ENCODE measurements at regions of chr12 and their contacts with region 1.

Region 1: GRCh38 chr12:46260151-46260918 is 8.5 kb downstream of the SLC38A1 start:
- DNase-seq: no peak
- ATAC-seq: no peak
- H3K4me3 ChIP-seq: no peak overlapping the region
- H3K4me3 Mint-ChIP-seq: no peak overlapping the region
- H3K27ac ChIP-seq: peak overlapping the region; percentile 23
- H3K27ac Mint-ChIP-seq: no peak overlapping the region
- H3K4me1 ChIP-seq: peaks cover 35 to 58% of the 10 kb centered on the region in 2 experiments
- H3K4me1 Mint-ChIP-seq: peaks cover 27 to 53% (median 53%) of the 10 kb centered on the region in 3 donors
- H3K27me3 ChIP-seq: no peaks in the 10 kb centered on the region
- H3K27me3 Mint-ChIP-seq: no peaks in the 10 kb centered on the region

Region 2: DNA sequence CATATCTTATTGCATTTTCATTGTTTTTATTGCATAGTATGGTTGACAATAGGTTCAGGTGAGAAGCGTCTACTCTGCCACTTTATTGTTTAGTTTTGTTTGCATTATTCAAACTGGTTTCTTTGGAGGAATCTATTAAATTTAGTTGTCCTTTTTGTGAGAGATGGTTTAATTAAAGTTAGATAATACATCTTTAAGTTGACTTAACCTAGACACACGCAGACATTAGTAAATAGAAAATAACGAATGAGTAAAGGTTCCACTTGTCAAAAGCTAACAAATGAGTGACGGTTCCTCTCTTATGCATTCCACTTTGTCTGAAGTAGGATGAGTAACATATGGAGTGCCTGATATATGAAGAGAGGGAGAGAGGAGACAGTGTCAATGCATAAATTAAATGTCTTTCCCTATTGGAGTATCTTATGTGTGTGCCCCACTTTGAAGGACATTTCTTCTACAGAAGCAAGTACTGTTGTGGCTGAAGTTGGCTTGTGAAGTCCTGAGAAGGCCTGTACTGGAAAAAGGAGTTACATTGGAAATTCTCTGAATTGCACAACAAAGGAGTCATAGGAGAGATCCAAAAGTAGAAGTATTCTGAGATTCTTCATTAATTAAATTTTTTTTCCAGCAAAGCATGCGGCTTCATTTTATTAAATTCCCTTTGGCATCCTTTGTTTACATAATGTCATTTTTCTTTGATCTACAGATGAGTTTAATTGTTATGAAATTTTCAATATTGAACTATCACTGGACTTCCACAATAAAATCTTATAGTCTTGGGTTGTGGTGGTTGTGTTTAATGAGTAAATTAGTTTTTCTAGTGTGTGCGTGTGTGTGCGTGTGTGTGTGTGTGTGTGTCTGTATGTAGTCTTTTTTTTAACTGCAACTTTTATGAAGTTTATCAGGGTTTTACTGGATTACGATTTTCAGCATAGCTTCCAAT is 456.4 kb before region 1 on chr12:
- CTCF ChIA-PET with region 1: no interaction called
- POLR2A ChIA-PET with region 1: no interaction called
- DNase-seq: no peak
- ATAC-seq: no peak
- H3K4me3 ChIP-seq: no peak overlapping the region
- H3K4me3 Mint-ChIP-seq: no peak overlapping the region
- H3K27ac ChIP-seq: no peak overlapping the region
- H3K27ac Mint-ChIP-seq: no peak overlapping the region
- H3K4me1 ChIP-seq: no peaks in the 10 kb centered on the region
- H3K4me1 Mint-ChIP-seq: peaks cover 57 to 65% (median 63%) of the 10 kb centered on the region in 3 donors
- H3K27me3 ChIP-seq: no peaks in the 10 kb centered on the region
- H3K27me3 Mint-ChIP-seq: no peaks in the 10 kb centered on the region

Region 3: GRCh38 chr12:46276756-46277155 is 16.4 kb after region 1 on chr12:
- CTCF ChIA-PET with region 1: interaction called in 1 of 2 experiments, 3 read pairs
- POLR2A ChIA-PET with region 1: interaction called in 1 of 2 experiments, 14 read pairs
- DNase-seq: no peak
- ATAC-seq: no peak
- H3K4me3 ChIP-seq: no peak overlapping the region
- H3K4me3 Mint-ChIP-seq: no peak overlapping the region
- H3K27ac ChIP-seq: no peak overlapping the region
- H3K27ac Mint-ChIP-seq: no peak overlapping the region
- H3K4me1 ChIP-seq: peaks cover 3 to 7% of the 10 kb centered on the region in 2 experiments
- H3K4me1 Mint-ChIP-seq: peaks cover 15 to 20% (median 18%) of the 10 kb centered on the region in 3 donors
- H3K27me3 ChIP-seq: peaks cover 0 to 4% of the 10 kb centered on the region in 2 experiments
- H3K27me3 Mint-ChIP-seq: no peaks in the 10 kb centered on the region